ENCODE measurements at regions of chr5 and their contacts with region 1.

Region 1: GRCh38 chr5:55994574-55995333 is at the start of gene IL6ST:
- DNase-seq: peak; percentile 97 to 98 (median 98)
- ATAC-seq: peak; percentile 98
- H3K4me3 ChIP-seq: peak within 1 kb of the TSS; percentile 90
- H3K27ac ChIP-seq: peak within 1 kb of the TSS; percentile 90
- H3K4me1 ChIP-seq: peaks cover 16 to 33% of the 10 kb centered on the region in 2 experiments
- H3K27me3 ChIP-seq: no peaks in the 10 kb centered on the region
- CTCF ChIP-seq: peak in 2 of 3 experiments; percentile 33 to 37; a peak in 3 of 6 replicates
- EP300 ChIP-seq: no peak
- POLR2A ChIP-seq: peak; percentile 89
- RAD21 ChIP-seq: no peak; a peak in 1 of 4 replicates
- polyA plus RNA-seq, gene IL6ST: 2.0 to 2.3 TPM

Region 2: DNA sequence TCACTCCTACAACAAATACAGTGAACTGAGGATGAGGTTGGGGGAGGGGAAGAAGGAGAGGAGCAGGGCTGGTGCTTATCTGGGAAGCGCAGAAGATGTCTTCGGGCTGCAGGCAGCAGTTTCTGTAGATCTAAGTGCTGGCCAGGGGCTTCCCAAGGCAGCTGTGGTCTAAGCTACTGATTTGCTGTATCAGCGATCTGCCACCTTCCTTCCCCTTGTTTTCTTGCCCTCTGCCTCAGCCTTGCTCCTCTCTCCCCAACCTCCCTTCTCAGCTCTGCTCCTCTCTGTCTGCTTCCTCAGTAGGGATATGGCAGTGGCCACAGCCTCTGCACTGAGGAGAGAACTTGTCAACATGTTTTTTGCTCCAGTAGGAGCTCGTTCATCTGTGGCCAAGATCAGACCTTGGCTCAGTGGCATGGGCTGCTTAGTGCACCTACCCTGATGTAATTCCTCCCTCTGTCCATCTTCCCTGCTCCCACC is 42.8 kb after region 1 on chr5:
- CTCF ChIA-PET with region 1: no interaction called
- POLR2A ChIA-PET with region 1: interaction called, 4 read pairs
- in situ Hi-C with region 1: no loop called
- intact Hi-C with region 1: loop called (anchors 5 kb)
- DNase-seq: peak; percentile 87 to 95 (median 90)
- ATAC-seq: peak; percentile 95
- H3K4me3 ChIP-seq: no peak overlapping the region
- H3K27ac ChIP-seq: peak overlapping the region; percentile 86
- H3K4me1 ChIP-seq: peaks cover 14 to 25% of the 10 kb centered on the region in 2 experiments
- H3K27me3 ChIP-seq: no peaks in the 10 kb centered on the region
- CTCF ChIP-seq: no peak
- EP300 ChIP-seq: peak; percentile 96
- POLR2A ChIP-seq: no peak
- RAD21 ChIP-seq: peak in 1 of 2 experiments; percentile 32; a peak in 1 of 4 replicates

Region 3: GRCh38 chr5:56056875-56057274 is 62.1 kb after region 1 on chr5:
- CTCF ChIA-PET with region 1: no interaction called
- POLR2A ChIA-PET with region 1: no interaction called
- in situ Hi-C with region 1: no loop called
- intact Hi-C with region 1: loop called (anchors 5 kb)
- DNase-seq: no peak
- ATAC-seq: no peak
- H3K4me3 ChIP-seq: no peak overlapping the region
- H3K27ac ChIP-seq: no peak overlapping the region
- H3K4me1 ChIP-seq: peaks cover 3 to 13% of the 10 kb centered on the region in 2 experiments; a peak in 4 of 5 replicates
- H3K27me3 ChIP-seq: no peaks in the 10 kb centered on the region
- CTCF ChIP-seq: no peak
- EP300 ChIP-seq: no peak
- POLR2A ChIP-seq: no peak
- RAD21 ChIP-seq: no peak